B cell (primary cell): ENCODE measurements at regions of chr19 and their contacts with region 1.

Region 1: GRCh38 chr19:46392243-46392801 is 21.0 kb downstream of the CCDC8 start:
- DNase-seq: no peak
- ATAC-seq: no peak
- H3K4me3 ChIP-seq: no peak overlapping the region
- H3K4me3 Mint-ChIP-seq: no peak overlapping the region
- H3K27ac ChIP-seq: no peak overlapping the region
- H3K27ac Mint-ChIP-seq: peak overlapping the region; percentile 56
- H3K4me1 ChIP-seq: peaks cover 0 to 4% of the 10 kb centered on the region in 2 donors
- H3K4me1 Mint-ChIP-seq: peaks cover 5% of the 10 kb centered on the region
- H3K27me3 ChIP-seq: no peaks in the 10 kb centered on the region
- H3K27me3 Mint-ChIP-seq: no peaks in the 10 kb centered on the region
- CTCF ChIP-seq: no peak

Region 2: GRCh38 chr19:46346821-46347571 is 45.3 kb before region 1 on chr19 and contains the start of gene PPP5C:
- CTCF ChIA-PET with region 1: interaction called, 4 read pairs
- POLR2A ChIA-PET with region 1: no interaction called
- intact Hi-C with region 1: loop called (anchors 1 kb)
- DNase-seq: peak; percentile 92
- ATAC-seq: peak; percentile 81
- H3K4me3 ChIP-seq: peak within 1 kb of the TSS; percentile 70 to 99 (median 90)
- H3K4me3 Mint-ChIP-seq: peak within 1 kb of the TSS; percentile 95
- H3K27ac ChIP-seq: peak within 1 kb of the TSS; percentile 59 to 86
- H3K27ac Mint-ChIP-seq: peak within 1 kb of the TSS; percentile 92
- H3K4me1 ChIP-seq: peaks cover 48 to 55% of the 10 kb centered on the region in 2 donors
- H3K4me1 Mint-ChIP-seq: peaks cover 56% of the 10 kb centered on the region
- H3K27me3 ChIP-seq: no peaks in the 10 kb centered on the region
- H3K27me3 Mint-ChIP-seq: peaks cover 9% of the 10 kb centered on the region
- CTCF ChIP-seq: peak; percentile 71
- total RNA-seq, gene PPP5C: 51.2 and 58.6 TPM in 2 replicates

Region 3: GRCh38 chr19:46366620-46367292 is 25.6 kb before region 1 on chr19:
- CTCF ChIA-PET with region 1: no interaction called
- POLR2A ChIA-PET with region 1: no interaction called
- intact Hi-C with region 1: no loop called
- DNase-seq: no peak
- ATAC-seq: no peak
- H3K4me3 ChIP-seq: no peak overlapping the region
- H3K4me3 Mint-ChIP-seq: no peak overlapping the region
- H3K27ac ChIP-seq: no peak overlapping the region
- H3K27ac Mint-ChIP-seq: no peak overlapping the region
- H3K4me1 ChIP-seq: peaks cover 0 to 4% of the 10 kb centered on the region in 2 donors
- H3K4me1 Mint-ChIP-seq: peaks cover 8% of the 10 kb centered on the region
- H3K27me3 ChIP-seq: no peaks in the 10 kb centered on the region
- H3K27me3 Mint-ChIP-seq: no peaks in the 10 kb centered on the region
- CTCF ChIP-seq: no peak

Region 4: GRCh38 chr19:46487802-46488445 is 95.6 kb after region 1 on chr19:
- CTCF ChIA-PET with region 1: interaction called, 11 read pairs
- POLR2A ChIA-PET with region 1: no interaction called
- intact Hi-C with region 1: loop called (anchors 1 kb)
- DNase-seq: peak; percentile 78
- ATAC-seq: peak; percentile 49
- H3K4me3 ChIP-seq: no peak overlapping the region
- H3K4me3 Mint-ChIP-seq: no peak overlapping the region
- H3K27ac ChIP-seq: no peak overlapping the region
- H3K27ac Mint-ChIP-seq: no peak overlapping the region
- H3K4me1 ChIP-seq: peaks cover 23 to 43% of the 10 kb centered on the region in 2 donors
- H3K4me1 Mint-ChIP-seq: peaks cover 22% of the 10 kb centered on the region
- H3K27me3 ChIP-seq: peaks cover 0 to 69% (median 44%) of the 10 kb centered on the region in 4 experiments
- H3K27me3 Mint-ChIP-seq: peaks cover 64% of the 10 kb centered on the region
- CTCF ChIP-seq: peak; percentile 83

Region 5: DNA sequence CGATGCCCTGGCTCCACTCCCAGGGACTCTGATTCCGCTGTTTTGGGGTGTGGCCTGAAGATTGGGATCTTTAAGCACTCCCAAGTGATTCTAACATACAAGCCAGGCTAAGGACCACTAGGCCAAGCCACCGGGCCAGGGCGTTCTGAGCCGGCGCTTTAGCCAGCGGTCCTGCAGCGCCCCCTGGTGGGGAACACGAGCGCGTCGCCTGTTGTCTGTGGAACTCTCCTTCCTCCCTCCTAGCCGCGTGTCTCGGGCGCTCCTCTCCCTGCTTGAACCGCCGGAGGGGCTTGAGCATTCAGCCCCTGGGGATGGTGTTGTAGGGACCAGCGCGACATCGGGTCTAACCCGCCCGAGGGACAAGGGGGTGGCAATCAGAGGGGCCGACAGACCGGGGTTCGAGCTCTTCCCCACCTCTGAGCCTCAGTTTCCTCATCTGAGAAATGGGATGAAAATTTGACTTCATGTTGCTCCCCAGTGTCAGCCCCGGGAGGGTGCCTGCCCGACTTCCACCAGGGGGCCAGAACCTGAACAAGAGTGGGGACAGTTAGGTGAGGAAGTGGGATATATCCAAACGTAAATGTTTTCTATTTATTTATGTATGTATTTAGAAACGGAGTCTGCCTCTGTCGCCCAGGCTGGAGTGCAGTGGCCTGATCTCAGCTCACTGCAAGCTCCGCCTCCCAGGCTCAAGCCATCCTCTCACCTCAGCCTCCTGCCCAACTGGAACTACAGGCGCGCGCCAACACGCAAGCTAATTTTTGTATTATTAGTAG is 121.3 kb after region 1 on chr19:
- CTCF ChIA-PET with region 1: interaction called, 12 read pairs
- POLR2A ChIA-PET with region 1: no interaction called
- intact Hi-C with region 1: loop called (anchors 1 kb)
- DNase-seq: peak; percentile 68
- ATAC-seq: peak; percentile 63
- H3K4me3 ChIP-seq: no peak overlapping the region
- H3K4me3 Mint-ChIP-seq: no peak overlapping the region
- H3K27ac ChIP-seq: no peak overlapping the region
- H3K27ac Mint-ChIP-seq: no peak overlapping the region
- H3K4me1 ChIP-seq: no peaks in the 10 kb centered on the region
- H3K4me1 Mint-ChIP-seq: peaks cover 4% of the 10 kb centered on the region
- H3K27me3 ChIP-seq: peaks cover 0 to 30% (median 1%) of the 10 kb centered on the region in 4 experiments
- H3K27me3 Mint-ChIP-seq: peaks cover 37% of the 10 kb centered on the region
- CTCF ChIP-seq: peak; percentile 96

Region 6: DNA sequence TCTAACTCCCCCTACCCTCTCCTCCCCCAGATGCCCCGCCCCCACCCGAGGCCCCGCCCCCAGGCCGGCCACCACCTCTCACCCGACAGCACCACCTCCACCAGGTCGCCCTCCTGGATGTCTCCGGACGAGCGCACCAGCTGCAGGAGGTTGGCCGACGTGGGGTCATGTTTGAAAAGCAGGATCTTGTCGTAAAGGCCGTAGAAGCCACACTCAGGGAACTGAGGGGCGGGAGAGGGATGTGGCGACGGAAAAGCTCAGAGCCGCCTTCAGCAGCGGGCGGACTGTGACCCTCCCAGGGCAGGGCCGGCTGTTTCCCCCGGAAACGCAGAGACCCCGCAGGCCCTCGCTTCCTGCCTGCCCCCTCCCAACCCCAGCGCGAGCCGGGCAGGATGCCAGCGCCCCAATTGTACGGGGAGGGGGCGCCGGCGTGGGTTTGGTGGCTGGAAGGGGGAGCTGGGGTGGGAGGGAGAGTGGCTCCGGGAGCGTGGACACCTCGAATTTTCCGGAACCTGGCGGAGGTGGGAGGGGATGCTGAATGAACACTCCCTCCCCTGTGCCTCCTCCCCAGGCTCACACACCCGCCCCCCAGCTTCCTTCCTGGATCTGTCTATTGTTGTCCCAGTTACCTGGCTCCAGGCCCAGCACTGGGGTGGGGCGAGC is 321.6 kb after region 1 on chr19:
- CTCF ChIA-PET with region 1: no interaction called
- POLR2A ChIA-PET with region 1: no interaction called
- intact Hi-C with region 1: no loop called
- DNase-seq: peak; percentile 56
- ATAC-seq: peak; percentile 20
- H3K4me3 ChIP-seq: peak overlapping the region in 4 of 5 experiments; percentile 89 to 99 (median 94)
- H3K4me3 Mint-ChIP-seq: peak overlapping the region; percentile 97
- H3K27ac ChIP-seq: peak overlapping the region; percentile 82 to 89
- H3K27ac Mint-ChIP-seq: peak overlapping the region; percentile 94
- H3K4me1 ChIP-seq: peaks cover 25 to 42% of the 10 kb centered on the region in 2 donors
- H3K4me1 Mint-ChIP-seq: peaks cover 37% of the 10 kb centered on the region
- H3K27me3 ChIP-seq: no peaks in the 10 kb centered on the region
- H3K27me3 Mint-ChIP-seq: no peaks in the 10 kb centered on the region
- CTCF ChIP-seq: no peak